ENCODE measurements at regions of chr14 and their contacts with region 1.

Region 1: GRCh38 chr14:75709207-75709812 is 48.3 kb downstream of the TTLL5 start:
- DNase-seq: no peak

Region 2: DNA sequence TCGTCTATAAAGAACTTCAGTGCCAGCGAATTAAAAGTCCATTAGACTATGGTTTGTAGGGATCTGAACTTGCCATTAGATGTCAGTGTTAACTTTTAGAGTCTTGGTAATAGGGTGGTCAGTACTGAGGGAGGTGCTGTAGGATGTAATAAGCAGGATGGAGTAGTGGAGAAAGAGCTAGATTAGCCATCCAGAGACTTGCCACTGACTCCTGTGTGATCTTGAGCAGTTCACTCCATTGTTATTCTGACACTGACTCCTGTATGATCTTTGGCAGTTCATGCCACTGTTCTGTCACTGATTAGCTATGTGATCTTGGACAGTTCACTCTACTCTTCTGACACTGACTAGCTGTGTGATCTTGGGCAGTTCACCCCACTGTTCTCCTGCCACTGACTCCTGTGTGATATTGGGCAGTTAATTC is 85.3 kb after region 1 on chr14:
- intact Hi-C with region 1: loop called (anchors 1 kb)
- DNase-seq: no peak

Region 3: GRCh38 chr14:75906676-75907280 is 197.5 kb after region 1 on chr14:
- intact Hi-C with region 1: loop called (anchors 5 kb)
- DNase-seq: no peak

Region 4: GRCh38 chr14:75982266-75983018 is 273.1 kb after region 1 on chr14:
- intact Hi-C with region 1: loop called (anchors 1 kb)
- DNase-seq: peak; percentile 90

Region 5: GRCh38 chr14:76352639-76353281 is 643.5 kb after region 1 on chr14:
- intact Hi-C with region 1: loop called (anchors 5 kb)
- DNase-seq: peak; percentile 70

Measured in cardiac septum (tissue), 1 donor.